ENCODE measurements at regions of chr6 and their contacts with region 1.

Region 1: GRCh38 chr6:7424967-7425807 is 35.6 kb downstream of the RIOK1 start:
- DNase-seq: peak; percentile 50 to 81 (median 73)
- ATAC-seq: peak; percentile 84 to 88
- H3K4me3 ChIP-seq: no peak overlapping the region
- H3K27ac ChIP-seq: peak overlapping the region; percentile 58
- H3K4me1 ChIP-seq: no peaks in the 10 kb centered on the region
- H3K27me3 ChIP-seq: no peaks in the 10 kb centered on the region

Region 2: GRCh38 chr6:7541175-7542064 is 116.2 kb after region 1 on chr6 and contains the start of gene DSP:
- intact Hi-C with region 1: loop called in 2 of 4 experiments (anchors 5 to 10 kb)
- DNase-seq: peak; percentile 53 to 85 (median 82)
- ATAC-seq: peak; percentile 76 to 84
- H3K4me3 ChIP-seq: peak within 1 kb of the TSS; percentile 70
- H3K27ac ChIP-seq: peak within 1 kb of the TSS; percentile 78
- H3K4me1 ChIP-seq: no peaks in the 10 kb centered on the region
- H3K27me3 ChIP-seq: no peaks in the 10 kb centered on the region
- total RNA-seq, gene DSP: 239 to 311 (median 248) TPM

Region 3: DNA sequence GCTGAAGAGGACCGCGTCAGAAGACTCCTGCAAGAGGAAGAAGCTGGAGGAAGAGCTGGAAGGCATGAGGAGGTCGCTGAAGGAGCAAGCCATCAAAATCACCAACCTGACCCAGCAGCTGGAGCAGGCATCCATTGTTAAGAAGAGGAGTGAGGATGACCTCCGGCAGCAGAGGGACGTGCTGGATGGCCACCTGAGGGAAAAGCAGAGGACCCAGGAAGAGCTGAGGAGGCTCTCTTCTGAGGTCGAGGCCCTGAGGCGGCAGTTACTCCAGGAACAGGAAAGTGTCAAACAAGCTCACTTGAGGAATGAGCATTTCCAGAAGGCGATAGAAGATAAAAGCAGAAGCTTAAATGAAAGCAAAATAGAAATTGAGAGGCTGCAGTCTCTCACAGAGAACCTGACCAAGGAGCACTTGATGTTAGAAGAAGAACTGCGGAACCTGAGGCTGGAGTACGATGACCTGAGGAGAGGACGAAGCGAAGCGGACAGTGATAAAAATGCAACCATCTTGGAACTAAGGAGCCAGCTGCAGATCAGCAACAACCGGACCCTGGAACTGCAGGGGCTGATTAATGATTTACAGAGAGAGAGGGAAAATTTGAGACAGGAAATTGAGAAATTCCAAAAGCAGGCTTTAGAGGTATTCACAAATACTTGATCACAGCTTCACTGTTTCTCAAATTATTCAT is 155.9 kb after region 1 on chr6:
- intact Hi-C with region 1: no loop called
- DNase-seq: no peak
- ATAC-seq: no peak
- H3K4me3 ChIP-seq: no peak overlapping the region
- H3K27ac ChIP-seq: no peak overlapping the region
- H3K4me1 ChIP-seq: no peaks in the 10 kb centered on the region
- H3K27me3 ChIP-seq: no peaks in the 10 kb centered on the region

Measured in right cardiac atrium (tissue), 5 donors.